GM10248 (cell line): ENCODE measurements at regions of chr2 and their contacts with region 1.

Region 1: DNA sequence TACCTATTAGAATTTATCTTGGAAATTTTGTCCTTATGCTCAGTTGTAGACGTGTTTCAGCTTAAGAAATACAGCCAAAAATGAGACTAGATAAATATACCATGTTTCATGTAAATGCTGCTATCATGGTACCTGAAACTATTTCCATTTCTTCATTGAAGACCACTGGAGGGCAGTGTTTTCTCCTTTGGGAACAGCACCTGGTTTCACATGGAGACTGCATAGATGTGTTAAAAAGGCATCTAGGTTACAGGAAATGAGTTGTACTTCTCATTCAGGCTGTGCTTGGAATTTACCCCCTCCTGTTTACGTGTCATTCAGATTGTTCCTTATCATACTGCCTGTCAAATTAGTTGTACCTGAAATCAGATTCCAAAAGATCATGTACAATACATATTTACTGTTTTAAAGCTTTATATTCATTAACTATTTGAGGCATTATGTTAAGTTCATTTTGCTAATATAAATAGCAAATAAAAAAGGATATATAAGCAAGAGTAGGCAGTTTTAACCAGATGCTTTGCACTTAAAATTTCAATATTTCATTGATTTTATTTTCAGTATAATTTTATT is 57.3 kb upstream of the PSMD14 start:
- DNase-seq: peak; percentile 38
- CTCF ChIP-seq: peak; percentile 48

Region 2: GRCh38 chr2:161238560-161239325 is 12.2 kb before region 1 on chr2:
- CTCF ChIA-PET with region 1: interaction called, 17 read pairs
- POLR2A ChIA-PET with region 1: no interaction called
- DNase-seq: peak; percentile 46
- CTCF ChIP-seq: peak; percentile 1

Region 3: DNA sequence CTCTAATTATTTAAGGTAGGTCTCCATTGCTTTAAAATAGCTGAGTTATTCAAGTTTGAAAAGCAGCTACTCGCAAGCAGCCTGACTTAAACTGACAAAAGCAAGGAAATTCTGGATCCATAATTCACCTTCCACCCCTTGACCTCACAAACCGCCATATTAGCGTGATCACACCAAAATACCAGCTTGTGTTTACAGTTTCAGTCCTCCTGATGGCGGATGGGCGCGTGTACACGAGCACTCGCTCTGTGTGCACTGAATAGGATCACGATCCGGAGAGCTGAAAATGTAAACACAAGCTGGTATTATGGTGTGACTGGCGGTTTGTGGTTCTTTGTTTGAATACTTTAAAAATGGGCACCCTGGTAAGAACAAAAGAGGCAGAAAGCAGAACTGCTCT is 14.9 kb after region 1 on chr2:
- CTCF ChIA-PET with region 1: interaction called, 25 read pairs
- POLR2A ChIA-PET with region 1: no interaction called
- DNase-seq: no peak
- CTCF ChIP-seq: no peak